Common myeloid progenitor, CD34-positive (primary cell): ENCODE measurements at regions of chr17 and their contacts with region 1.

Region 1: GRCh38 chr17:63697341-63698286 is 2.3 kb downstream of the LIMD2 start:
- DNase-seq: peak; percentile 88 to 95 (median 94)
- H3K4me3 ChIP-seq: peak overlapping the region; percentile 64 to 88 (median 76)
- H3K27ac ChIP-seq: peak overlapping the region in 1 of 2 experiments; percentile 89
- H3K4me1 ChIP-seq: peaks cover 3 to 71% (median 57%) of the 10 kb centered on the region in 4 experiments
- H3K27me3 ChIP-seq: no peaks in the 10 kb centered on the region

Region 2: GRCh38 chr17:63600569-63601438 is 96.8 kb before region 1 on chr17 and contains the start of gene TACO1:
- CTCF ChIA-PET with region 1: no interaction called
- POLR2A ChIA-PET with region 1: no interaction called
- DNase-seq: peak; percentile 82 to 84 (median 82)
- H3K4me3 ChIP-seq: peak within 1 kb of the TSS; percentile 60 to 97 (median 92)
- H3K27ac ChIP-seq: peak within 1 kb of the TSS; percentile 68 to 85
- H3K4me1 ChIP-seq: peaks cover 8 to 27% (median 13%) of the 10 kb centered on the region in 4 experiments
- H3K27me3 ChIP-seq: no peaks in the 10 kb centered on the region

Region 3: DNA sequence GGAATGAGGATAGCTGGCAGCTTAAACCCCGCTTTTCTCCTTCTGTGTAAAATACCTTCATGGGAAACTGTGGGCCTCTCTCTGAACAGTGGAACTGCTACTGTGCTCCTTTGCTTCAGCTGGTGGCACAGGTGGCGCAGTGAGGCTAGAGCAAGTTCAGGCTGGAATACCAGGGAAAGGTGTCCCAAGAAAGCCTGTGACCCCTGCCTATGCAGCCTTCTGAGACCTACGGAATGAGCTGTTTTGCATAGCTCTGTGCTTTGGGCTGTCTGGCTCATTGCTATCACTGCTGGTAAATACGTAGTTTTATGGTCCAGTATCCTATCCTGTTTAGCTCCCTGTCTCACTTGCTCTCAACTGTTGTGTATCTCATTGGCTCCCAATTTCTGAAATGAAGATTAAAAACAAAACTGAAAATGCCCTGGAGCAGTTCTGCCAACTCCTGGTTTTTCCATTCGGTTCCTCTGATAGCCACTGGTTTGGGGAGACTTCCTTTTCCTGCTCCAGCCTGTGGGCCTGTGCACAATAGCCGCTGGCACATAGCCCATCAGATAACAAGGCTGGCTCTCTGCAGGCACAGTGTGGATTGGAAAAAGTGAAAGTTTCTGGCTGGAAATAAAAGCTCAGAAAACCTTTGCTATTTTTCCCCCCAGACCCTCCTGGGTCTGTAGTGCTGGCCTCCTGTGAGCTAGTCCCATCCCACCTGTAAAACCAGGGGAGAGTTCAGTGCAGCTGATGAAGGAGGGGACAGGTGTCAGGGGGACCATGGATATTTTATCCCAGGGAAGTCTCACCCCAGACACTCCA is 21.8 kb before region 1 on chr17:
- CTCF ChIA-PET with region 1: interaction called, 104 read pairs
- POLR2A ChIA-PET with region 1: interaction called, 9 read pairs
- DNase-seq: peak; percentile 73 to 79 (median 79)
- H3K4me3 ChIP-seq: peak overlapping the region in 4 of 7 experiments; percentile 6 to 64 (median 48)
- H3K27ac ChIP-seq: peak overlapping the region; percentile 27 to 62
- H3K4me1 ChIP-seq: peaks cover 27 to 40% (median 32%) of the 10 kb centered on the region in 4 experiments
- H3K27me3 ChIP-seq: no peaks in the 10 kb centered on the region

Region 4: DNA sequence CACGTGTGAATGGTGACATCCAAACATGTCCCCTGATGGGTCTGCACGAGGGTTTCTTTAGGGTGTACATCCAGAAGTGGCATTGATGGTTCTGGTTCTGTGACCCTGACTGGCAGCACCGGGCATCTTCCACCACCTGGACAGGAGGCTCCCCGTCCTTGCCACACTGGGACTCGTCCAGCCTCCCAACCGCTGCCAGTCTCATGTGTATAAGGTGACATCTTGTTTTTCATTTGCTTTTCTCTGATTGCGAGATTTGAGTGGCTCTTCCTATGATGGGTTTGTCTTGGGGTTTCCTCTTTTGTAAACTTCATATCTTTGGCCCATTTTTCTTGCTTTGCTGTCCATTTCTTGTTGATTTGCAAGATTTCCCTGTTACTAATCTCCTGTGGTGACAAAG is 11.5 kb after region 1 on chr17:
- CTCF ChIA-PET with region 1: interaction called, 111 read pairs
- POLR2A ChIA-PET with region 1: interaction called, 14 read pairs
- DNase-seq: no peak
- H3K4me3 ChIP-seq: no peak overlapping the region
- H3K27ac ChIP-seq: no peak overlapping the region
- H3K4me1 ChIP-seq: peaks cover 4 to 24% (median 18%) of the 10 kb centered on the region in 4 experiments
- H3K27me3 ChIP-seq: no peaks in the 10 kb centered on the region

Region 5: DNA sequence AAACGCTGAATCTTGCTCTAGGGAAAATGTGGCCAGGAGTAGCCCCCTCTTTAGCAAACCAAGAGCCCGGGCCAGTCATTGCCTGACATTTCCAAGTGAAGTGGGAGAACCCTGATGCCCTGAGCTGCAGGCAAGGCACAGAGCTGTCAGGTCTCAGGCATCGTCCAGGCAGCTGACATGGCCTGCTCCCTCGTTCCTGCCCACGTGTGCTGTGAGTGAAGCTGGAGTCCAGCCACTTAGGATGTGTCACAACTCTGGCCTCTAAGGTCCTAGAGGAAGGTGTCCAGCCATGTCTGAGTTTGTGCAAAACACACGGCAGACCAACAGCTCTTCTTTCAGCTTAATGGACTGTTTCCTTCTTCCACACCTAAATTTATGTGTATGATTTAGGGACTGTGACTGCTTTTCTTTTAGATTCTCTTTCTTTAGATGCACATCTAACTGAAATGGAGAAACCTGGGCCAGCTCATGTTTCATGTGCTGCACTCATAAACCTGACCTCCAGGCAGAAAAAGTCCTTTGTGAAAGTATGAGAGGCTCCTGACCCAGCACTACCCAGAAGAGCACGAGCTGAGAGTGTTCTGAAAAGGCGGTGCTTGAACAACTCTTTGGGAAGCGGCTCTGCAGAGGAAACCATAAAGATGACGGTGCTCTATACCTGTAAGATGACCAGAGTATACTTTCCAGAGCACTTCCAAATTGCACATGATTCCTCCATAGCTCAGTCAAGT is 17.1 kb after region 1 on chr17:
- CTCF ChIA-PET with region 1: interaction called, 111 read pairs
- POLR2A ChIA-PET with region 1: interaction called, 14 read pairs
- DNase-seq: no peak
- H3K4me3 ChIP-seq: no peak overlapping the region
- H3K27ac ChIP-seq: no peak overlapping the region
- H3K4me1 ChIP-seq: no peaks in the 10 kb centered on the region
- H3K27me3 ChIP-seq: no peaks in the 10 kb centered on the region

Region 6: GRCh38 chr17:63834431-63835166 is 137.0 kb after region 1 on chr17:
- CTCF ChIA-PET with region 1: interaction called, 10 read pairs
- POLR2A ChIA-PET with region 1: interaction called, 3 read pairs
- DNase-seq: peak; percentile 92 to 95 (median 93)
- H3K4me3 ChIP-seq: no peak overlapping the region
- H3K27ac ChIP-seq: no peak overlapping the region
- H3K4me1 ChIP-seq: peaks cover 0 to 43% (median 35%) of the 10 kb centered on the region in 4 experiments
- H3K27me3 ChIP-seq: no peaks in the 10 kb centered on the region

Region 7: GRCh38 chr17:63911657-63912426 is 214.2 kb after region 1 on chr17:
- CTCF ChIA-PET with region 1: no interaction called
- POLR2A ChIA-PET with region 1: no interaction called
- DNase-seq: peak in 2 of 3 donors; percentile 48 to 61
- H3K4me3 ChIP-seq: no peak overlapping the region
- H3K27ac ChIP-seq: no peak overlapping the region
- H3K4me1 ChIP-seq: no peaks in the 10 kb centered on the region
- H3K27me3 ChIP-seq: no peaks in the 10 kb centered on the region